Activated CD4-positive, alpha-beta T cell treated with anti-CD3 and anti-CD28 coated beads for 36 hours (primary cell): ENCODE measurements at regions of chr12 and their contacts with region 1.

Region 1: GRCh38 chr12:76348079-76348901 is at the start of gene BBS10:
- DNase-seq: peak; percentile 92
- ATAC-seq: peak; percentile 93
- H3K4me3 Mint-ChIP-seq: peak within 1 kb of the TSS; percentile 88
- H3K27ac Mint-ChIP-seq: peak within 1 kb of the TSS; percentile 94
- H3K4me1 Mint-ChIP-seq: peaks cover 21% of the 10 kb centered on the region
- H3K27me3 Mint-ChIP-seq: no peaks in the 10 kb centered on the region
- total RNA-seq, gene BBS10: 3.5 to 4.0 TPM

Region 2: DNA sequence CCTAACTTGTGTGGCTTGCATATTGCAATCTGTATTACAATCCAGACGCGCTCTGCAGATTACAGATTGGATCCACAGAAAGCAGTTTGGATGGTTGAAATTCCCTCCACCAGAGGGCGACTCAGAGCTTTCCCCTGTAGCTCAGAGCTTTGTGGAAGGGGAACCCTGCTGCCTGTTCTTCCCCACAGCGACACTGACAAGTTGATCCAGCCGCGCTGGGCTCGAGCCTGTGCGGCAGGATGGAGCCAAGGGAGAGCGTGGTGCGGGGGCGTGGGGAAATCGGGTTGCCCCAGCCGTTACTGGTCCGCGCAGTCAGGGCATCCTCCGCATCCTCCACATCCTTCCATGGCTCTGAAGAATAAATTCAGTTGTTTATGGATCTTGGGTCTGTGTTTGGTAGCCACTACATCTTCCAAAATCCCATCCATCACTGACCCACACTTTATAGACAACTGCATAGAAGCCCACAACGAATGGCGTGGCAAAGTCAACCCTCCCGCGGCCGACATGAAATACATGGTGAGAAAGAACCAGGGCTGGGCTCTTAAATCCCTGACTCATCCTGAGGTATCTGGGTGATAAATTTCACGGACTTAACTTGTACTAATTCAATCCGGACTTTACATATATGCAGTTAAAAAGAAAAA is 1013.8 kb before region 1 on chr12 and contains the start of gene GLIPR1L1:
- CTCF ChIA-PET with region 1: interaction called, 4 read pairs
- POLR2A ChIA-PET with region 1: no interaction called
- intact Hi-C with region 1: loop called (anchors 10 kb)
- DNase-seq: peak; percentile 91
- ATAC-seq: peak; percentile 82
- H3K4me3 Mint-ChIP-seq: peak within 1 kb of the TSS; percentile 61
- H3K27ac Mint-ChIP-seq: no peak within 1 kb of the TSS
- H3K4me1 Mint-ChIP-seq: peaks cover 25% of the 10 kb centered on the region
- H3K27me3 Mint-ChIP-seq: peaks cover 21% of the 10 kb centered on the region
- total RNA-seq, gene GLIPR1L1: not detected

Region 3: GRCh38 chr12:75944097-75944904 is 404.0 kb before region 1 on chr12:
- CTCF ChIA-PET with region 1: no interaction called
- POLR2A ChIA-PET with region 1: no interaction called
- intact Hi-C with region 1: loop called in 1 of 2 experiments (anchors 2 kb)
- DNase-seq: peak; percentile 42
- ATAC-seq: peak; percentile 92
- H3K4me3 Mint-ChIP-seq: peak overlapping the region; percentile 37
- H3K27ac Mint-ChIP-seq: peak overlapping the region; percentile 90
- H3K4me1 Mint-ChIP-seq: peaks cover 31% of the 10 kb centered on the region
- H3K27me3 Mint-ChIP-seq: no peaks in the 10 kb centered on the region

Region 4: DNA sequence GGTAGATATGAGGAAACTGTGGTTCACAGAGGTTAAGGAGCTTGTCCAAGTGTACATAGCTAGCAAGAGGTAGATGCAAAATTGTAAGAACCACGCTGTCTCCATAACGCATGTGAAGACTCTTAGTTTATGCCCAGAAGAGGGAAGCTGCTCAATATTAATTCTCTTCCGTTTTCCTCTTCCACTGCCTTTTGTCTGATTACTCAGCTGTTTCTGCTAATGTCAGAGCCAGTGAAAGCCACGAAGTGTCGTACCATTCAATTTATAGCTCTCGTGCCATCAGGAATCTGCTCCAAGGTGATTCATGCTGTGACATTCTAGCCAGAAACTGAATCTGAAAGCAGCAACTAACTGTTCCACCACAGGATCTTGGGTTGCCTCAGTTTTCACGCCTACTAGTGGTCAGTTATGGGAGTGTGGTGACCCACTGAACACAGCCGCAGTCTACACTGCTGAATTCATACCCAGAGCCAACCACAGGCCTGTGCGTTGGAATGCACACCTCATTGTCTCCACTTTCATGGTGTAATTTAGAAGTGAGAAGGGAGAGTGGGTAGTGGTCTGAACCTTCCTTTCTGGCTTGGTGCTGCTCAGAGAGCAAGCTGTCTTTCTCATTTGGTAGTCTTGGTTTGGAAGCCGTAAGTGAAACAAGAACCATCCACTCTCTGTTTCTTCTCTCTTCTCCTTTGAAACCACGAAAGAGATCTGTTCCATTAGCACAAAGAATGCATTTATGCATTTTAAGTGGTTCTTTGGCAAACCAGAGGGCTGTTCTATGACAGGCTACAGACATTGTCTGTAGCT is 189.6 kb before region 1 on chr12:
- CTCF ChIA-PET with region 1: interaction called, 5 read pairs
- POLR2A ChIA-PET with region 1: no interaction called
- intact Hi-C with region 1: loop called (anchors 1 to 2 kb)
- DNase-seq: peak; percentile 85
- ATAC-seq: peak; percentile 97
- H3K4me3 Mint-ChIP-seq: peak overlapping the region; percentile 18
- H3K27ac Mint-ChIP-seq: peak overlapping the region; percentile 26
- H3K4me1 Mint-ChIP-seq: peaks cover 15% of the 10 kb centered on the region
- H3K27me3 Mint-ChIP-seq: peaks cover 2% of the 10 kb centered on the region

Region 5: GRCh38 chr12:76259660-76260389 is 88.5 kb before region 1 on chr12:
- CTCF ChIA-PET with region 1: no interaction called
- POLR2A ChIA-PET with region 1: no interaction called
- intact Hi-C with region 1: no loop called
- DNase-seq: no peak
- ATAC-seq: no peak
- H3K4me3 Mint-ChIP-seq: no peak overlapping the region
- H3K27ac Mint-ChIP-seq: no peak overlapping the region
- H3K4me1 Mint-ChIP-seq: no peaks in the 10 kb centered on the region
- H3K27me3 Mint-ChIP-seq: peaks cover 14% of the 10 kb centered on the region

Region 6: GRCh38 chr12:76329163-76329562 is 19.1 kb before region 1 on chr12:
- CTCF ChIA-PET with region 1: no interaction called
- POLR2A ChIA-PET with region 1: no interaction called
- intact Hi-C with region 1: no loop called
- DNase-seq: no peak
- ATAC-seq: no peak
- H3K4me3 Mint-ChIP-seq: no peak overlapping the region
- H3K27ac Mint-ChIP-seq: no peak overlapping the region
- H3K4me1 Mint-ChIP-seq: no peaks in the 10 kb centered on the region
- H3K27me3 Mint-ChIP-seq: peaks cover 18% of the 10 kb centered on the region

Region 7: GRCh38 chr12:76455582-76456345 is 107.5 kb after region 1 on chr12:
- CTCF ChIA-PET with region 1: interaction called, 18 read pairs
- POLR2A ChIA-PET with region 1: no interaction called
- intact Hi-C with region 1: loop called (anchors 1 kb)
- DNase-seq: peak; percentile 31
- ATAC-seq: peak; percentile 99
- H3K4me3 Mint-ChIP-seq: no peak overlapping the region
- H3K27ac Mint-ChIP-seq: no peak overlapping the region
- H3K4me1 Mint-ChIP-seq: peaks cover 33% of the 10 kb centered on the region
- H3K27me3 Mint-ChIP-seq: no peaks in the 10 kb centered on the region

Region 8: GRCh38 chr12:76763743-76764675 is 415.7 kb after region 1 on chr12 and contains the start of gene ZDHHC17:
- CTCF ChIA-PET with region 1: interaction called, 3 read pairs
- POLR2A ChIA-PET with region 1: no interaction called
- intact Hi-C with region 1: loop called in 1 of 2 experiments (anchors 5 kb)
- DNase-seq: peak; percentile 93
- ATAC-seq: peak; percentile 89
- H3K4me3 Mint-ChIP-seq: peak within 1 kb of the TSS; percentile 96
- H3K27ac Mint-ChIP-seq: peak within 1 kb of the TSS; percentile 97
- H3K4me1 Mint-ChIP-seq: peaks cover 41% of the 10 kb centered on the region
- H3K27me3 Mint-ChIP-seq: no peaks in the 10 kb centered on the region
- total RNA-seq, gene ZDHHC17: 17.6 to 22.7 TPM